CD14-positive monocyte (primary cell): ENCODE measurements at regions of chr10 and their contacts with region 1.

Region 1: DNA sequence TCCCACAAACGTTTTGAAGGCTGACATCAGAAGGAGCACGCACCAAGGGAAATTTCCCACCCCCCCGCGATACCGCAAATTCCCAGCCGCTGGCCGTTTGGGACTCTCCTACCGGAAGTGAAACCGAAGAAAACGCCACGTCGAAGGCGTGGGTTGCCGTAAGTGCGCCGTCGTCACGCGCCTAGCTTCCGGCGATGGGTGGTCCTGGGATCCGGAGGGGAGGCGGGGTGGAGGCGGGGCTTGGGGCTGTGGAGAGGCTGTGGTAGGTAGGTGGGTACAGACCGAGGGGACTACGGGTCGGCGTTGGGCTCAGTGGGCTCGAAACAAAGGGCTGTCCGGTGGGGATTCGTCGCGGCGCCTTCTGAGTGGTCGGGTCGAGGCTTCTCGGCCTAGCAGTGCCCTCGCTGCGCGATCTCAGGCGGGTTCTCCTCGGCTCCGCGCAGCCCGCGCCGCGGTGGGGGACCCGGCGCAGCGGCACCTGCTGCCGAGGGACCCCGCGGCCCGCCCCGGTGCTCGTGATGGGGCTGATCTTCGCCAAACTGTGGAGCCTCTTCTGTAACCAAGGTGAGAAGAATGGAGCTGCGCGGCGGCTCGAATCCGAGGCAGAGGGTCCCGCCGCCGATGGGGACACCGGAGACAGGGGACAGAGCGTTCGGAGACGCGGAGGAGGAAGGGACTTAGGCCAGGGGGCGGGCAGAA is at the start of gene ARL5B:
- DNase-seq: peak; percentile 96 to 100 (median 97)
- H3K4me3 ChIP-seq: peak within 1 kb of the TSS; percentile 84 to 100 (median 97)
- H3K4me3 Mint-ChIP-seq: peak within 1 kb of the TSS; percentile 99 to 100
- H3K27ac ChIP-seq: peak within 1 kb of the TSS; percentile 85 to 96
- H3K27ac Mint-ChIP-seq: peak within 1 kb of the TSS; percentile 97 to 100 (median 98)
- H3K4me1 ChIP-seq: peaks cover 17 to 35% of the 10 kb centered on the region in 2 donors
- H3K4me1 Mint-ChIP-seq: peaks cover 30% of the 10 kb centered on the region
- H3K27me3 ChIP-seq: no peaks in the 10 kb centered on the region
- H3K27me3 Mint-ChIP-seq: no peaks in the 10 kb centered on the region
- CTCF ChIP-seq: no peak
- polyA plus RNA-seq, gene ARL5B: 1.3 to 14.4 (median 1.4) TPM

Region 2: GRCh38 chr10:16817125-16818019 is 1841.9 kb before region 1 on chr10 and contains the start of gene RSU1:
- intact Hi-C with region 1: loop called in 1 of 2 experiments (anchors 10 kb)
- DNase-seq: peak; percentile 100
- H3K4me3 ChIP-seq: peak within 1 kb of the TSS; percentile 62 to 93 (median 88)
- H3K4me3 Mint-ChIP-seq: peak within 1 kb of the TSS; percentile 87 to 98
- H3K27ac ChIP-seq: peak within 1 kb of the TSS; percentile 52 to 86
- H3K27ac Mint-ChIP-seq: peak within 1 kb of the TSS; percentile 81 to 97 (median 93)
- H3K4me1 ChIP-seq: peaks cover 40 to 52% of the 10 kb centered on the region in 2 donors
- H3K4me1 Mint-ChIP-seq: peaks cover 53% of the 10 kb centered on the region
- H3K27me3 ChIP-seq: peaks cover 0 to 2% of the 10 kb centered on the region in 2 donors
- H3K27me3 Mint-ChIP-seq: peaks cover 0 to 10% (median 5%) of the 10 kb centered on the region in 3 donors
- CTCF ChIP-seq: no peak
- polyA plus RNA-seq, gene RSU1: 45.7 to 111 (median 100) TPM

Region 3: DNA sequence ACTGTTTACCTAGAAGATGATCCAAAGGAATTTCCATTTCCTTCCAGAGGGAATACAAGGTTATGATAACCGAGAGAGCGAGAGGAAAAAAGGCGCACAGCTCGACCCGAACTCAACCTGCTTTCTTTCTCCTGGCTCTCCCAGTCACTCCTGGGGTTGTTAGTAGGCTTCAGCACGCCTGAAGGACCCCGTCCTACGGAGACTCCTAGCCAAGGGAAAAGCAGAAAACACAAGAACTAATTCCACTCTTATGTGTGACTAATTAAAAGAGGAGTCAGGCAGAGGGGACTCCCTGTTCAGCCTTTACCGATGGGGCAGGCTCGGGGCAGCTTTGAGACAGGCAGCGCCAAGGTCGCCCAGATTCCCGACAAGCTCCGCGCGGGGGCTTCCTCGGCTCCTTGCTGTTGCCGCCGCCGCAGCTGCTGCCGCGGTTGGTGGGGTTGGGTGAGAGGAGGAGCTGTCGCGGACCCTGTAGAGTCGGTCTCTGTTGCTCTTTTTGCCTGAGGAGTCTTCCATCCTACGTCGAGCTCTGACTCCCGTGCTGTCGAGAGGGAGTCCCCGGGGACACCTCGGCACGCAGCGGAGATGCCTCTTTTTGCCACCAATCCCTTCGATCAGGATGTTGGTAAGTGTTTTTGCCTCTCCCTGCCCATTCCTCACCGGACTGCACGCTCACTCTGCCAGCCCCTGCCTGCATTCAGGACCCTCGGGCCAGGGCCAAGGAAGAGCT is 1015.3 kb before region 1 on chr10 and contains the start of gene STAM:
- intact Hi-C with region 1: loop called in 1 of 2 experiments (anchors 10 kb)
- DNase-seq: peak; percentile 84 to 85 (median 85)
- H3K4me3 ChIP-seq: peak within 1 kb of the TSS; percentile 60 to 96 (median 86)
- H3K4me3 Mint-ChIP-seq: peak within 1 kb of the TSS; percentile 99
- H3K27ac ChIP-seq: peak within 1 kb of the TSS; percentile 89 to 97
- H3K27ac Mint-ChIP-seq: peak within 1 kb of the TSS; percentile 99 to 100 (median 100)
- H3K4me1 ChIP-seq: peaks cover 48 to 49% of the 10 kb centered on the region in 2 donors
- H3K4me1 Mint-ChIP-seq: peaks cover 51% of the 10 kb centered on the region
- H3K27me3 ChIP-seq: no peaks in the 10 kb centered on the region
- H3K27me3 Mint-ChIP-seq: peaks cover 0 to 2% (median 2%) of the 10 kb centered on the region in 3 donors
- CTCF ChIP-seq: no peak
- polyA plus RNA-seq, gene STAM: 5.5 to 16.4 (median 5.9) TPM

Region 4: GRCh38 chr10:18157881-18158280 is 501.4 kb before region 1 on chr10:
- intact Hi-C with region 1: no loop called
- DNase-seq: no peak
- H3K4me3 ChIP-seq: no peak overlapping the region
- H3K4me3 Mint-ChIP-seq: no peak overlapping the region
- H3K27ac ChIP-seq: no peak overlapping the region
- H3K27ac Mint-ChIP-seq: no peak overlapping the region
- H3K4me1 ChIP-seq: no peaks in the 10 kb centered on the region
- H3K4me1 Mint-ChIP-seq: no peaks in the 10 kb centered on the region
- H3K27me3 ChIP-seq: no peaks in the 10 kb centered on the region
- H3K27me3 Mint-ChIP-seq: peaks cover 0 to 2% (median 1%) of the 10 kb centered on the region in 3 donors
- CTCF ChIP-seq: no peak